ENCODE measurements at regions of chr4 and their contacts with region 1.

Region 1: DNA sequence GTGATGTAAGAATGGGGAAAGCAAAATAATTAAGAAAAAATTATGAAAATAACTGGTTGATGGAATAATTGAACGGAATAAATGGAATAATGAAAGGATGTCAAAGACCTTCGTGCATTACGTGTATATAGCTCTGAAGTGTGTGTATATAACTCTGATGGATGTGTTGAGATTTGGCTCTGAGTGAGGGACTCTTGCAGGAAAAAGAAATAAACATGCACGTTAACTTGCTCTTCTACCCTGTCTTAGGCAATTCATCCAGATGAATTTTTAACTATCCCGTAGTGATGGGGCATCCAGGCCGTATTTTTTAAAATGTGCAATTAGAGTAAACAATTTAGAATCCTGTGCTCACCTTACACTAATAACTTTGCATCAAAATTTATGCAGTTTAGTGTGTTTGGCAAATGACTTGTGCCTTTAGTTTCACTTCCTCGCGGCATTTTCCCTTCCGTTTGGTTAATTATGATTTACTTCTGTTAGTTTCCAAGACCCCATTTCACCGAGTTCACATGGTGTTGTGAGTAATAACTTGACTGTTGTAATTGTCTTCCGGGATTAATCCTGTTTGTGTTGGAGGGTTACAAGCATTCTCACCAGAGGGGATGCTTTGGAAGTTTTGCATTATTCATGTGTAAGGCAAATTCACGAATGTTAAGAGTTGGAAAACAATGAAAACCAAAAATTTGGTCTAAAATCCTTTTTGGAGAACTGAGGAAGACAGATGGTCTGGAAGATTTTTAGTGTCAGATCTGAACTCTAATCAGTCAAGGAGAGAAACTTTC is 256.5 kb upstream of the FAT1 start:
- DNase-seq: no peak
- H3K4me3 ChIP-seq: peak overlapping the region in 1 of 59 donors; percentile 11
- H3K27ac ChIP-seq: no peak overlapping the region
- H3K27me3 ChIP-seq: no peaks in the 10 kb centered on the region
- CTCF ChIP-seq: no peak

Region 2: DNA sequence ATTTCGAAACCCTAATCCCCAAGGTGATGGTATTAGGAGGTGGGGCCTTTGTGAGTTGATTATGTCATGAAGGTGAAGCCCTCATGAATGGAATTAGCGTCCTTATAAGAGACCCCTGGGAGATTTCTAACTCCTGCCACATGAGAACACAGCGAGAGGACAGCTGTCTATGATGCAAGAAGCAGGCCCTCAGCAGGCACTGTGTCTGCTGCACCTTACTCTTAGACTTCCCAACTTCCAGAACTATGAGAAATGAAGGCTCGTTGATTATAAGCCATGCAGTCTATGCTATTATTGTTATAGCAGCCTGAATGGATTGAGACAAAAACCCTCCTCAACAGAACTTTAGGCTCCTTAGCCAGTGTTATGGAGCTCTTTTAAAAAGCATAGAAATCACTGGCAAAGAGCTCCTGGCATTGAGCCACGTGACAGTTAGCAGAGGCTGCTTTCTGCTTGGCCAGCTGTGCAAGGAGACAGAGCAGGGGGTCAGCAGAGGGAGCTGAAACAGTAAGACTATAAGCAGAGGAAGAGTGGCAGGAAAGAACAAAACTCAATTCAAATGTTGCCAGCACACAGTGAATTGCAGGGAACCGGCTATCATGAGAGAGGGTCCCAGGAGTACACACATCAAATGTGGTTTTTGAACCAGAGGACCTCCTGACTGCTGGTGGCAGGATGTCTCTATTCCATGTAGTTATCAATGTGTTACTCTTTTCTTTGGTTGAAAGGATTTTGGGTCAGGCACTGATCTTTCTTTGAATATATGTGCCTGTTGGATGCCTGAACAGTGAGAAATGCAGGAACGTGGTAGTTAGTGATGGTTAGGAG is 37.2 kb before region 1 on chr4:
- intact Hi-C with region 1: loop called in 1 of 2 experiments (anchors 5 kb)
- DNase-seq: no peak
- H3K4me3 ChIP-seq: no peak overlapping the region
- H3K27ac ChIP-seq: no peak overlapping the region
- H3K27me3 ChIP-seq: peaks cover 0 to 13% (median 0%) of the 10 kb centered on the region in 45 donors
- CTCF ChIP-seq: no peak

Region 3: GRCh38 chr4:187380181-187380641 is 400.1 kb after region 1 on chr4:
- intact Hi-C with region 1: no loop called
- DNase-seq: no peak
- H3K4me3 ChIP-seq: no peak overlapping the region
- H3K27ac ChIP-seq: no peak overlapping the region
- H3K27me3 ChIP-seq: no peaks in the 10 kb centered on the region
- CTCF ChIP-seq: no peak